ENCODE measurements at regions of chr15 and their contacts with region 1.

Region 1: GRCh38 chr15:40941528-40942336 is 11.5 kb upstream of the CHAC1 start:
- DNase-seq: peak; percentile 43 to 80 (median 68)
- ATAC-seq: peak; percentile 59 to 81
- H3K4me3 Mint-ChIP-seq: peak overlapping the region; percentile 75 to 89 (median 82)
- H3K27ac Mint-ChIP-seq: peak overlapping the region; percentile 78 to 94 (median 86)
- H3K4me1 Mint-ChIP-seq: peaks cover 18 to 39% (median 35%) of the 10 kb centered on the region in 4 donors
- H3K27me3 Mint-ChIP-seq: no peaks in the 10 kb centered on the region

Region 2: GRCh38 chr15:40906091-40906990 is 35.4 kb before region 1 on chr15:
- POLR2A ChIA-PET with region 1: interaction called, 23 read pairs
- DNase-seq: peak; percentile 65 to 84 (median 77)
- ATAC-seq: peak; percentile 66 to 75
- H3K4me3 Mint-ChIP-seq: peak overlapping the region; percentile 79 to 93 (median 86)
- H3K27ac Mint-ChIP-seq: peak overlapping the region; percentile 13 to 95 (median 91)
- H3K4me1 Mint-ChIP-seq: peaks cover 12 to 46% (median 43%) of the 10 kb centered on the region in 4 donors
- H3K27me3 Mint-ChIP-seq: no peaks in the 10 kb centered on the region

Region 3: GRCh38 chr15:40918146-40918798 is 23.5 kb before region 1 on chr15:
- POLR2A ChIA-PET with region 1: interaction called, 10 read pairs
- DNase-seq: no peak
- ATAC-seq: no peak
- H3K4me3 Mint-ChIP-seq: no peak overlapping the region
- H3K27ac Mint-ChIP-seq: no peak overlapping the region
- H3K4me1 Mint-ChIP-seq: peaks cover 0 to 9% (median 0%) of the 10 kb centered on the region in 4 donors
- H3K27me3 Mint-ChIP-seq: peaks cover 0 to 3% (median 0%) of the 10 kb centered on the region in 5 donors

Region 4: GRCh38 chr15:40928821-40929659 is 12.7 kb before region 1 on chr15 and contains the start of gene DLL4:
- POLR2A ChIA-PET with region 1: interaction called, 50 read pairs
- DNase-seq: peak in 6 of 10 donors; percentile 16 to 55 (median 47)
- ATAC-seq: peak; percentile 49 to 62
- H3K4me3 Mint-ChIP-seq: peak within 1 kb of the TSS; percentile 73 to 90 (median 84)
- H3K27ac Mint-ChIP-seq: peak within 1 kb of the TSS in 1 of 10 donors; percentile 44
- H3K4me1 Mint-ChIP-seq: peaks cover 23 to 66% (median 56%) of the 10 kb centered on the region in 4 donors
- H3K27me3 Mint-ChIP-seq: peaks cover 22 to 72% (median 53%) of the 10 kb centered on the region in 5 donors
- polyA plus RNA-seq, gene DLL4: not detected

Region 5: GRCh38 chr15:40952901-40953712 is 11.4 kb after region 1 on chr15 and contains the start of gene CHAC1:
- POLR2A ChIA-PET with region 1: interaction called, 47 read pairs
- DNase-seq: peak; percentile 88 to 97 (median 94)
- ATAC-seq: peak; percentile 96 to 97
- H3K4me3 Mint-ChIP-seq: peak within 1 kb of the TSS; percentile 89 to 96 (median 93)
- H3K27ac Mint-ChIP-seq: peak within 1 kb of the TSS; percentile 53 to 92 (median 82)
- H3K4me1 Mint-ChIP-seq: peaks cover 0 to 19% (median 11%) of the 10 kb centered on the region in 4 donors
- H3K27me3 Mint-ChIP-seq: peaks cover 0 to 2% (median 0%) of the 10 kb centered on the region in 5 donors
- polyA plus RNA-seq, gene CHAC1: not detected

Region 6: DNA sequence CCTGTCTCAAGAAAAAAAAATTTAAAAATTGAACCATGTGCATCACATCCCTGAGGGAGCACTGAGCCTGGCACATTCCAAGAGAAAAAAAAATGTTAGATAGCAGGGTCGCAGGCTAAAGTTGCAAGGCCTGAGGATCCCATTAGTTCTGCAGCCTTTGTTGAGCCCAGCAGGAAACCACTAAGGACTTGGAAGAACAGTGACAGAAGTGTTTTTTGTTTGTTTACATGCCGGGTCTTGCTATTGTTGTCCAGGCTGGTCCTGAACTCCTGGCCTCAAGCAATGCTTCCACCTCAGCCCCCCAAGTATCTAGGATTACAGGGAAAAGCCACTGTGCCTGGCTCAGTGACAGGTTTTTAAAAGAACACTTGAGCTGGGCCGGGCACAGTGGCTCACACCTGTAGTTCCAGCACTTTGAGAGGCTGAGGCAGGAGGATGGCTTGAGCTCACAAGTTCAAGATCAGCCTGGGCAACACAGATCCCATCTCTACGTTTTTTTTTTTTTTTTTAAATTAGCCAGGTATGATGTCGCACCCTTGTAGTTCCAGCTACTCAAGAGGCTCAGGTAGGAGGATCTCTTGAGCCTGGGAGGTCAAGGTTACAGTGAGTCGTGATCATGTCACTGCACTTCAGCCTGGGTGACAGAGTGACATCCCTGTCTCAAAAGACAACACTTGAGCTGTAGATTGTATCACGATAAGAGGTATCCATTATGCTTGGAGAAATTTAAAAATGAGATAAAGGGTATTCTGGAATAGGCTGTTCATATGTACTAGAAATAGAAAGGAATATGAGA is 26.8 kb after region 1 on chr15:
- POLR2A ChIA-PET with region 1: no interaction called
- DNase-seq: no peak
- ATAC-seq: no peak
- H3K4me3 Mint-ChIP-seq: no peak overlapping the region
- H3K27ac Mint-ChIP-seq: peak overlapping the region in 1 of 10 donors; percentile 66
- H3K4me1 Mint-ChIP-seq: peaks cover 0 to 10% (median 6%) of the 10 kb centered on the region in 4 donors
- H3K27me3 Mint-ChIP-seq: peaks cover 0 to 3% (median 0%) of the 10 kb centered on the region in 5 donors

Region 7: DNA sequence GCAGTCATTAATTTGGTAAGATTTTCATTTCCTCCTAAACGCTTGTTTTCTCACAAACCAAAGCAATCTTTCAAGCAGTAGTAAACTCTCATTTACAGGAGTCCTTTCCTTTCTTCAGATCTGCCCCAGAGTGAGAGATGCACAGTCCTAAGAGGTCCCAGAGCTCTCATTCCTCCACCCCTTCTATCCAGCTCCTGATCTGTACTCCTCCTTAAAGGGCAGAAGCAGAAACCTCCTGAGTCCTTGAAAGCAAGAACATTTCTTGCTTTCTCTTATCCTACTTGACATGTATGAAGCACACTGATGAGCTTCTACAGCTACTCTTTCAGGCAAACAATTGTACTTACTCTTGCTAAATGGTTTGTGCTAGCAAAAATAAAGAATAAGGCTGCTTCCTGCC is 277.1 kb after region 1 on chr15:
- POLR2A ChIA-PET with region 1: no interaction called
- DNase-seq: no peak
- ATAC-seq: no peak
- H3K4me3 Mint-ChIP-seq: no peak overlapping the region
- H3K27ac Mint-ChIP-seq: no peak overlapping the region
- H3K4me1 Mint-ChIP-seq: no peaks in the 10 kb centered on the region
- H3K27me3 Mint-ChIP-seq: peaks cover 2 to 25% (median 12%) of the 10 kb centered on the region in 5 donors